KBM-7 (cell line): ENCODE measurements at regions of chr13 and their contacts with region 1.

Region 1: GRCh38 chr13:76903544-76904162 is 17.4 kb upstream of the KCTD12 start:
- DNase-seq: peak; percentile 73

Region 2: GRCh38 chr13:75876360-75877050 is 1027.1 kb before region 1 on chr13:
- in situ Hi-C with region 1: loop called (anchors 25 kb)
- DNase-seq: peak; percentile 66

Region 3: DNA sequence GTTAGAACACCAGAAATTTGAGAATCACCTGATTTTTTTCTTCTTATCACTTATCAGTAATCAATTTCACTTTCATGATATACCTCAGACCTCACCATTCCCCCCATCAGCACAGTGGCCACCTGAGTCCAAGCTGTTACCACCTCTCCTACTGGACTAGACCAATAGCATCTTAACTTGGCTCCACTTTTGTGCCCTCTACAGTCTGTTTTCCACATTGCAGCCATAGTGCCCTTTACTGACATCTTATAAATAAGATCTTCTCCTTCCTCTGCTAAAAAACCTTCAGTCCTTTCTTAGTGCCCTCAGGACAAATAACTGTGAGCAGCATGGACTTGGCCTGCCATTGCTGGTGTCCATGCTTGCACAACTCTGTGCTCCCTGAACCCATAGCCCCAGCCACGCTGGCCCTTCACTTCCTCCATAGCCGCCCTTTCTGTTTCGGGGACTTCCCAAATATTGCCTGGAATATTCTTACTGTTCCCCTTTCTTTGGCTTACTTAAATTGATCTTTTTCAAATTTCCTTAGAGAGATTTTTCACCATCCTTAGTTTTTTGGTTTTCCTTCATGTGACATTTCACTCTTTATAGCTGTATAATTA is 886.8 kb before region 1 on chr13:
- in situ Hi-C with region 1: loop called (anchors 25 kb)
- DNase-seq: peak; percentile 40

Region 4: GRCh38 chr13:76707360-76707759 is 196.3 kb before region 1 on chr13:
- in situ Hi-C with region 1: no loop called
- DNase-seq: no peak